ENCODE measurements at regions of chr17 and their contacts with region 1.

Region 1: GRCh38 chr17:48037036-48037837 is at the start of gene COPZ2:
- DNase-seq: peak; percentile 70 to 75
- ATAC-seq: peak; percentile 85 to 92 (median 90)
- H3K4me3 ChIP-seq: peak within 1 kb of the TSS; percentile 56 to 88 (median 73)
- H3K27ac ChIP-seq: peak within 1 kb of the TSS; percentile 58 to 85 (median 81)
- H3K4me1 ChIP-seq: peaks cover 7 to 17% (median 13%) of the 10 kb centered on the region in 9 donors
- H3K27me3 ChIP-seq: peaks cover 0 to 37% (median 0%) of the 10 kb centered on the region in 7 donors
- CTCF ChIP-seq: peak; percentile 31 to 69 (median 60)
- total RNA-seq, gene COPZ2: 45.3 to 67.3 (median 60.7) TPM

Region 2: DNA sequence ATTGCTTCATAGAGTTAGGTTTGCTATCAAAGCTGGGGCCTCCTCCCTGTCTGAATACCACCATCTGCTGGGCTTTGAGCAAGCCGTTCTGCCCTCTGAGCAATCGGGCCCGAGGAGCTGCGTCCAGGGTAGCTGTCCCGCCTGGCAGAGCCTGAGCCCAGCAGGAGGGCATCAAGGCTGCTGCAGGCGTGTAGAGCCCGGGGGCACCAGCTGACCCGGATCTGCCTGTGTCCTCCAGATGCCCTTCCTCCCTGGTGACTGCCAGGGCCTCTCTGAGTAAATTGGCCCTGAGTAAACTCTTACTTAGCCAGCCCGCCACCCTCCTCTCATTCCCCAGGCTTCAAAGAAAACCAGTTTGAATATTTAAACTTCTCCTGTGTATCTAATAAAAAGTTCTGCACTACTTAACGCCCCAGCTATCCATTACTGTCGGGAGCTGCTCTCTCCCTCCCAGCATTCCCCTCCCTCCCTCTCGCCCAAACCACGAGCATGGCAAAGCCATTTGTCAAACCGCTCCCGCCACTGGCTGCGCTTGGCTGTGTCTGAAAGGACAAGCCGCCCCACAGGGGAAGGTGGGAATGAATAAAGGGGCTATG is 49.9 kb before region 1 on chr17:
- intact Hi-C with region 1: no loop called
- DNase-seq: no peak
- ATAC-seq: peak in 6 of 8 donors; percentile 23 to 61 (median 54)
- H3K4me3 ChIP-seq: no peak overlapping the region
- H3K27ac ChIP-seq: peak overlapping the region in 3 of 10 donors; percentile 28 to 70 (median 57)
- H3K4me1 ChIP-seq: peaks cover 0 to 36% (median 20%) of the 10 kb centered on the region in 9 donors
- H3K27me3 ChIP-seq: no peaks in the 10 kb centered on the region
- CTCF ChIP-seq: no peak

Region 3: GRCh38 chr17:48002266-48002915 is 34.8 kb before region 1 on chr17:
- intact Hi-C with region 1: no loop called
- DNase-seq: no peak
- ATAC-seq: peak; percentile 38 to 89 (median 76)
- H3K4me3 ChIP-seq: no peak overlapping the region
- H3K27ac ChIP-seq: peak overlapping the region in 7 of 10 donors; percentile 35 to 90 (median 54)
- H3K4me1 ChIP-seq: peaks cover 0 to 71% (median 15%) of the 10 kb centered on the region in 9 donors
- H3K27me3 ChIP-seq: peaks cover 0 to 3% (median 0%) of the 10 kb centered on the region in 7 donors
- CTCF ChIP-seq: no peak

Region 4: GRCh38 chr17:48830840-48831548 is 793.8 kb after region 1 on chr17 and contains the start of gene CALCOCO2:
- intact Hi-C with region 1: loop called in 1 of 10 experiments (anchors 10 kb)
- DNase-seq: peak; percentile 94
- ATAC-seq: peak; percentile 95 to 99 (median 97)
- H3K4me3 ChIP-seq: peak within 1 kb of the TSS; percentile 50 to 97 (median 74)
- H3K27ac ChIP-seq: peak within 1 kb of the TSS; percentile 93 to 100 (median 96)
- H3K4me1 ChIP-seq: peaks cover 19 to 50% (median 45%) of the 10 kb centered on the region in 9 donors
- H3K27me3 ChIP-seq: no peaks in the 10 kb centered on the region
- CTCF ChIP-seq: peak in 1 of 9 donors; percentile 21
- total RNA-seq, gene CALCOCO2: 196 to 412 (median 275) TPM